AG04449 (cell line): ENCODE measurements at regions of chr1 and their contacts with region 1.

Region 1: DNA sequence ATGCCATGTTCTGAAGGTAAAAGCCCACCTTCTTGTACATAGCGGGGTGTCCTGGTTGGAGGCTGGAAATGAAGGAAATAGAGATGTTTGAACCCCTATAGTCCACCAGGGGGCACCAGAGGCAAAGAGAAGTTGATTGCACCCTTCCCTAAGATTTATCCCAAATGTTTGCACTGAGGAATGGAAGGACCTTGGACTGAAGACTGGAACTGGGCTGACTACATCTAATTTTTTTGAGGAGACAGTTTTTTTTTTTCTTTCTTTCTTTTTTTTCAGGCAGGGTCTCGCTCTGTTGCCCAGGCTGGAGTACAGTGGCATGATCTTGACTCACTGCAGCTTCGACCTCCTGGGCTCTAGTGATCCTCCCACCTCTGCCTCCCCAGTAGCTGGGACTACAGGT is 55.3 kb upstream of the EIF4G3 start:
- DNase-seq: no peak
- H3K4me3 ChIP-seq: no peak overlapping the region
- CTCF ChIP-seq: peak; percentile 55

Region 2: GRCh38 chr1:20696397-20697329 is 535.4 kb before region 1 on chr1:
- CTCF ChIA-PET with region 1: interaction called, 11 read pairs
- POLR2A ChIA-PET with region 1: no interaction called
- DNase-seq: peak; percentile 70
- H3K4me3 ChIP-seq: peak overlapping the region; percentile 70
- CTCF ChIP-seq: peak; percentile 90

Region 3: GRCh38 chr1:20987831-20988825 is 243.9 kb before region 1 on chr1:
- CTCF ChIA-PET with region 1: no interaction called
- POLR2A ChIA-PET with region 1: no interaction called
- DNase-seq: no peak
- H3K4me3 ChIP-seq: no peak overlapping the region
- CTCF ChIP-seq: no peak

Region 4: GRCh38 chr1:21261551-21262281 is 29.7 kb after region 1 on chr1:
- CTCF ChIA-PET with region 1: interaction called, 191 read pairs
- POLR2A ChIA-PET with region 1: interaction called, 4 read pairs
- DNase-seq: peak; percentile 89
- H3K4me3 ChIP-seq: peak overlapping the region; percentile 15; the same call in 1 of the 2 replicates
- CTCF ChIP-seq: no peak

Region 5: GRCh38 chr1:21324368-21325141 is 92.5 kb after region 1 on chr1:
- CTCF ChIA-PET with region 1: interaction called, 16 read pairs
- POLR2A ChIA-PET with region 1: no interaction called
- DNase-seq: no peak
- H3K4me3 ChIP-seq: peak overlapping the region; percentile 20
- CTCF ChIP-seq: no peak

Region 6: DNA sequence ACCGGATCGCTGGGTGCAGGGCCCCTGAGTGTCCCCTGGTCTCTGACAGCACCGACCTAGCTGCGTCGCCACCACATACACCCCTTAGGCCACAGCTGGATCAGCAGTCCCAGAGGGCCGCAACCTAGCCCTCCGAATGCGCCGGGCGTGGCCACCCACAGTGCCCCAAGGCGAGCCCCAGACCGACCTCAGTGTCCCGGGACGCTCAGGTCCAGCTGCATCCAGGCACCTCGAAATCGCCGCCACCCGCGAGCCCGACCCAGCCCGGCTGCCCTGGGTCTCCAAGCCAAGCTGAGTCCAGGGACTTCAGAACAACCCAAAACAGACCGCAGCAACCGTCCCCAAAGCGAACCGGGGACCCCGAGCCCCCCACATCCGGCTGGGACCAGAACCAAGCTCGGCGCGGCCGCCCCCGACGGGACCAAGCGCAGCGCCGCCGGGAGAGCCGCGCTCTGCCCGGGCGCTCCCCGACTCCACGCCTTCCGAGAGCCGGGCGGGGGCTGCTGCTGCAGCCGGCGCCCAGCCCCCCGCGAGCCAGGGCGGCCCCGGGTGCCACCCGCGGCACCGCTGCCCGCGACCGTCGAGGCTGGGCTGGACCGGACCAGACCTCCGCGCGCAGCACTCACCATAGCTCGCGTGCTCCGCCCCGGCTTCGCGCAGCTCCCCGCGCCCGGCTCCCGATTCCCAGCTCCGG is 112.9 kb after region 1 on chr1:
- CTCF ChIA-PET with region 1: interaction called, 20 read pairs
- POLR2A ChIA-PET with region 1: no interaction called
- DNase-seq: no peak
- H3K4me3 ChIP-seq: peak overlapping the region; percentile 84
- CTCF ChIP-seq: no peak

Region 7: DNA sequence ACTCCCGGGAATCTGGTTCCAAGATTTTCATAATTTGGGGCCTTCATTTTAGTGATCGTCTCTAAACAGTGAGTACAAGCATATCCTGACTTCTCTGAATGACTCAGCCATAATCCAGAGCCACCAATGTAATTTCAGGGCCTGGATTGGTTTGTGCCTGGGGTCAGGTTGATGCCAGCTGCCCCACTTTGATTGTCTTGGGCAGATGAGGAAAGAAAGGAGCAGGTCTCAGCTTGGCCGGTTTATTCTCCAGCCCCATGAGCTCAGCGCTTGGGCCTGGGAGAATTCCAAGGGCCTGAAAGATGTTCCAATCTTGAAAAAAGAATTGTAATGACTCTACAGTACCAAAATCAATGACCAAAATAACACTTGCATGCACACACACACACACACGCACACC is 129.5 kb after region 1 on chr1:
- CTCF ChIA-PET with region 1: interaction called, 405 read pairs
- POLR2A ChIA-PET with region 1: interaction called, 4 read pairs
- DNase-seq: no peak
- H3K4me3 ChIP-seq: no peak overlapping the region
- CTCF ChIP-seq: no peak